ENCODE measurements at regions of chr6 and their contacts with region 1.

Region 1: GRCh38 chr6:170516783-170517616 is 36.1 kb downstream of the PSMB1 start:
- DNase-seq: peak in 1 of 2 donors; percentile 15
- ATAC-seq: peak in 7 of 8 donors; percentile 39 to 81 (median 61)
- H3K4me3 ChIP-seq: no peak overlapping the region
- H3K27ac ChIP-seq: no peak overlapping the region
- H3K4me1 ChIP-seq: peaks cover 0 to 3% (median 1%) of the 10 kb centered on the region in 9 donors
- H3K27me3 ChIP-seq: peaks cover 0 to 4% (median 0%) of the 10 kb centered on the region in 7 donors
- CTCF ChIP-seq: peak; percentile 50 to 82 (median 70)

Region 2: DNA sequence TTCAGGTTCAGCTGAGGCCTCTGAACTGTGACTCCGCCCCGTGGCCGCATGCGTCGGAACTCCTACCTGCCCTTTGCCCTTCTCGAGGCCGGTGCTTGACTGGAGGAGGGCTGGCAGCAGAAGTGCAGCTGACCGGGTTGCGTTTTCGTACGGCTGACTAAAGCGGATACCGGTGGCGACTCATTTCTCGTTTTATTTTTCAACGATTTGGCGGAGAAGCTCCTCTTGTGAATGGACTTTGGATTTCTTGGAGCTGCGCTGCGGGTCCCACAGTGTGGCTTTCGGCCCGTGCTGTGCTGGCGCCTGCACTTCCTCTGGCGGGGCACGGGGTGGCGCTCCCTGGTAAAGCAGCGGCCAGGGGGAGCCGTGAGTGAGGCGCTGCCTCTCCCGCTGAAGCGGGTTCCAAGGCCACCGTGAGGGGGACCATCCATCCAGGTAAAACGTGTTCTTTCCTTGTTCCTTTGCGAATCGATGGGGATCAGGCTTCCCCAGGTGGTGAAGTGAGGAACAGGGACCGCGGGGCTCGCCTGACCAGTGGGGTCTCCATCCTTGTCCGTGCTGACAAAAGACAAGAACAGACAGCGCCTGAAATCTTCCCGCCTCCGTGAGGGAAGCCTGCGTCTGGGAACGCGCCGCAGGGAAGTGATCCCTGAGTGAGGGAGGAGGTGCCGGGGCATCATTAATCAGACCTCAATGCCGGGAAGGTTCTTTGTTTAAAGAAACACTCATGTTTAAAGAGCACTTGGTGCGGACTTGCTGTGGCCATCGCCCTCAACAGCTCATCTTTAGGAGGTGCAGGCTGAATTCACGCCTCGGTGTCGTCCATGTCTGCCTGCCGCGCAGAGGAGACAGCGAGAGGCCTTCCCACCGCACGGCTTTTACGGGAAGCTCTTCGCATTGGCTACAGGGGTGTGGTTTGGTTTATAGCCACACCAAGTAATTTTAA is 726.7 kb before region 1 on chr6:
- intact Hi-C with region 1: loop called in 2 of 10 experiments (anchors 2 to 10 kb)
- DNase-seq: peak; percentile 55 to 70
- ATAC-seq: peak; percentile 93 to 98 (median 96)
- H3K4me3 ChIP-seq: peak overlapping the region in 9 of 10 donors; percentile 39 to 64 (median 57)
- H3K27ac ChIP-seq: peak overlapping the region in 6 of 10 donors; percentile 17 to 68 (median 43)
- H3K4me1 ChIP-seq: peaks cover 0 to 16% (median 10%) of the 10 kb centered on the region in 9 donors
- H3K27me3 ChIP-seq: peaks cover 0 to 24% (median 4%) of the 10 kb centered on the region in 7 donors
- CTCF ChIP-seq: peak; percentile 90 to 98 (median 96)

Region 3: DNA sequence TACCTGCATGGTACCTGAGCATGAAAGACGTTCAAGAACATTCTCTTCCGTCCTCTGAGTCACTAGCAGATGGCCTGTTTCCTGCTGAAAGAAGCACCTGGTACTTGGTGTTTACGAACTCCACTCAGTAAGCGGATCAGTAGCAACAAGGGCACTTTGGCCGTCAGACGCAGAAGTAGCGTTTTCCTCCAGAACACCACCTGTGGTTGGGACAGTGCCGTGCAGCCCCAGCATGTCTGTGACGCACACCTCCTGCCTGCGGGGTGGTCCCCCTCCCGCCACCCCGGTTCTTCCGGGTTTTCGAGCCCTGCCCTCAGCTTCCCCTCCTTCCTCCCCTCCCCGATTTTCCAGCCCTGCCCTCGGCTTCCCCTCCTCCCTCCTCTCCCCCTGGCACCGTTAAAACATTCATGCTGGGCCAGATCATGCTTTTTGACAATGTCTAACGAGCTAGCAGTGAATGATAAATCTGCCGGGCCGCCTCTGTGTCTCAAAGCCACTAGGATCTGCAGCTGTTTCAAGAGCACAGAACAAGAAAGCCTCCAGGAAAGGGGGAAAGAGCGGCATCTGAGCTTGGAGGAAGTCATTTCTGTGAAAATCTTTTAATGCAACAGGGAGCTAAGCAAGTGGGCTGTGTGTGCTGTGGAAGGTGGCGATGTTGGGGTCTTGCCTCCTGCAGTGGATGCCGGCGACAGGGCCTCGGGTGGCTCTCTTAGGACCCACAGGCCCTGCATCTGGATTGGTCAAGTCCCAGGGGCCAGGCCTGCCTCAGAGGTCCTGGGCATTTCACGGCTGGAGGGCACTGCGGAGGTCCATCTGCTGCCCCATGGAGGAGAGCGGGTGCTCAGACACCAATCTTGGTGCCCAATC is 557.6 kb before region 1 on chr6:
- intact Hi-C with region 1: loop called in 5 of 10 experiments (anchors 5 to 10 kb)
- DNase-seq: peak in 1 of 2 donors; percentile 14
- ATAC-seq: peak in 5 of 8 donors; percentile 30 to 56 (median 49)
- H3K4me3 ChIP-seq: peak overlapping the region in 2 of 10 donors; percentile 8 to 21
- H3K27ac ChIP-seq: no peak overlapping the region
- H3K4me1 ChIP-seq: peaks cover 0 to 29% (median 9%) of the 10 kb centered on the region in 9 donors
- H3K27me3 ChIP-seq: peaks cover 0 to 31% (median 17%) of the 10 kb centered on the region in 7 donors
- CTCF ChIP-seq: no peak

Region 4: DNA sequence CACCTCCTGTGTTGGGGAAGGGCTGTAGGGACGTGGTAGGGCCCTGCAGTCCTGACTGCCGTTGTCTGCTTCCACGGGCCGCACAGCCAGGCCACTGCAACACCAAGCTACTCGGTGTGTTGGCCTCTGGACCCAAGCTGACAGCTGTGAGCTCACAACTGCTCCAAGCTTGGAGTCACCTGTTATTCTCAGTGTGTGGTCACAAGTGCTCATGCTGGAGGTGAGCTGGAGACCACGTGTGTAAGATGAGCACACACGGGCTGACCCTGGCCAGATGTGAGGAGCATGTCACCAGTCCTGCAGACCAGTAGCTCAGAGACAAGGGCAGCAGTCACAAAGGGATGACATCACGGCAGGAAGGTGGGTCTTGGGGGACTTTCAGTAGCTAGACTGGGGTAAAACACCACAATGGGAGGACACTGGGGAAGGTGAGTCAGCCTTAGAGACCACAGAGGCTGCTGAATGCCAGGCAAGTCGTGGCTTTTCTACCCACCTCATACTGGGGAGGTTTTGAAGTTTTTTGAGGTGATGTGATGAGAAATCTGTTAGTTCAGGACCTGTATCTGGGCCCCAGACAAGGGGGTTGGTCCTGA is 123.1 kb before region 1 on chr6:
- intact Hi-C with region 1: loop called in 1 of 10 experiments (anchors 10 kb)
- DNase-seq: no peak
- ATAC-seq: no peak
- H3K4me3 ChIP-seq: no peak overlapping the region
- H3K27ac ChIP-seq: no peak overlapping the region
- H3K4me1 ChIP-seq: peaks cover 0 to 9% (median 8%) of the 10 kb centered on the region in 9 donors
- H3K27me3 ChIP-seq: no peaks in the 10 kb centered on the region
- CTCF ChIP-seq: no peak

Measured in heart right ventricle (tissue), 16 donors.